ENCODE measurements at regions of chr2 and their contacts with region 1.

Region 1: GRCh38 chr2:7427293-7428060 is 510.3 kb downstream of the RNF144A start:
- DNase-seq: peak in 1 of 2 experiments; percentile 62
- H3K4me3 ChIP-seq: no peak overlapping the region
- H3K4me3 Mint-ChIP-seq: no peak overlapping the region
- H3K27ac Mint-ChIP-seq: no peak overlapping the region
- H3K4me1 ChIP-seq: no peaks in the 10 kb centered on the region
- H3K4me1 Mint-ChIP-seq: no peaks in the 10 kb centered on the region
- H3K27me3 ChIP-seq: no peaks in the 10 kb centered on the region
- H3K27me3 Mint-ChIP-seq: peaks cover 11% of the 10 kb centered on the region
- CTCF ChIP-seq: peak; percentile 61 to 77

Region 2: DNA sequence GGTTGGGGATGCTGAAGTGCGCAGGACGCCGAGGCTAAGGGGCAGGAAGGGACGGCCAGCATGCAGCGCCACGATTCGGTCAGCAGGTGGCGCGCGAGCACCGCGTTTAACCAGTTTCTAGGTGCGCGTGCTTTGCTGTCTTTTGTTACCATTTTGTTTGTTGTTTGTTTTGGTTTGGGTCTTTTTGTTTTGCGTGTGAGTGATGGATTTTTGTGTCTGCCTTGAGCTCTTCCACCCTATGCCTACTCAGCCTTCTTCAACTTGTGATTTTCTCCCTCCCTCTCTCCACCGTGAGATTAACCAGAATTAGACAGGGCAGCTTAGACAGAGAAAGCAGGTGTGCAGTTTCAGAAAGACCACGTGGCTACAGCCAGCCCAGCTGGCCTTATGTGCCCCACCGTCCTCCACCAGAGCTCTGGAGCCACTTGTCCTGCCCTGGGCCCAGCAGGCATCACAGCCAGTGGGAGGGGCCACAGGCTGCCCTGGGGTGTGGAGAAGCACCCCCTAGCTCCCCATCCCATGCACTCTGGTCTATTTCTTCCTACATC is 330.1 kb before region 1 on chr2:
- CTCF ChIA-PET with region 1: no interaction called
- POLR2A ChIA-PET with region 1: no interaction called
- intact Hi-C with region 1: loop called (anchors 5 kb)
- DNase-seq: peak in 1 of 2 experiments; percentile 77
- H3K4me3 ChIP-seq: no peak overlapping the region
- H3K4me3 Mint-ChIP-seq: peak overlapping the region; percentile 27
- H3K27ac Mint-ChIP-seq: no peak overlapping the region
- H3K4me1 ChIP-seq: no peaks in the 10 kb centered on the region
- H3K4me1 Mint-ChIP-seq: peaks cover under 1% of the 10 kb centered on the region
- H3K27me3 ChIP-seq: no peaks in the 10 kb centered on the region
- H3K27me3 Mint-ChIP-seq: peaks cover 12% of the 10 kb centered on the region
- CTCF ChIP-seq: peak; percentile 93 to 96

Region 3: DNA sequence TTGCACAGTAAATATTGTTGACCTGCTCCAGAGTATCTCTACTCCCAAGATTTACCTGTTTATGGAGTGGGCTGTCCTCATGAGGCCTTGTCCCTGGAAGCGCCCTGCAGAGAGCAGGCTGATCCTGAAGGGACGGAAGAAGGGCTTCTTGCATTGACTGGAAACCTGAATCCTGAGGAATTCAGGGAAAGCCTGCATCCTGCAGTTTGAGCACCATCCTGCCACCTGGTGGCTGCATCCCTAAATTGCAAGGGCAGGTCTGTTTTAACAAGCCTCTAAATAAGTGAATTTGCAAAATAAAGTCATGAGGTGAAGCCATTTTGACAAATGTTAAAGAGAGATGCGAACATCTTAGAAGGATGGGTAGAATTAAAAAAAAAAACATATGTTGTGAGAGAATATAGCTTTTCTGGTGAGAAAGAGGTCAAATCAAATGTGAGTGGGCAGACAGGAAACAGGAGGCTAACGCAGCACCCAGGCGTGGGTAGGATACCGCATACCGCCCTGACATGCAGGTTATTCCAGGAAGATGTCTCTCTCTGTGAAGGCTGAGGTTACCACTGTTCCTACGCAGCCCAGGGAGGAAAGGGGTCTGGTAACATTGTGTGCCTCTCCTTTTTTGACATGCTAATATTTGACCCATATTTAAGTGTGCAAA is 244.7 kb after region 1 on chr2:
- CTCF ChIA-PET with region 1: no interaction called
- POLR2A ChIA-PET with region 1: no interaction called
- intact Hi-C with region 1: loop called (anchors 1 kb)
- DNase-seq: peak; percentile 47 to 64
- H3K4me3 ChIP-seq: no peak overlapping the region
- H3K4me3 Mint-ChIP-seq: no peak overlapping the region
- H3K27ac Mint-ChIP-seq: no peak overlapping the region
- H3K4me1 ChIP-seq: no peaks in the 10 kb centered on the region
- H3K4me1 Mint-ChIP-seq: peaks cover 13% of the 10 kb centered on the region
- H3K27me3 ChIP-seq: no peaks in the 10 kb centered on the region
- H3K27me3 Mint-ChIP-seq: no peaks in the 10 kb centered on the region
- CTCF ChIP-seq: peak; percentile 63 to 66

Region 4: DNA sequence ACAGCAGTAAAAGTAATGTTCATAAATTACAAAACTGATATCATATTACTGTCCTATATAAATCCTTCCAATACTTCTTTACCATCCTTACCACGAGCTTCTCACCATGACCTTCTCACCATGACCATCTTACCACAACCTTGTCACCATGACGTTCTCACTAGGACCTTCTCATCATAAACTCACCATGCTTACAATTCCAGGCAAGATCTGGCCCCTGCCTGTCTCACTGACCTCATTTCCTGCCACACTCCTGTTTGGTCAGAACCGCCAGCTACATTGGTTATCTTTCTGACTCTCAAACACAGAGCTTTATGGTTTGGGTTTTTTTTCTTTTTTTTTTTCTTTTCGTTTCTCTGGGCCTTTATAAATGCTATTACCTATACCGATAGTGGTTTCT is 317.4 kb after region 1 on chr2:
- CTCF ChIA-PET with region 1: interaction called, 5 read pairs
- POLR2A ChIA-PET with region 1: no interaction called
- intact Hi-C with region 1: loop called (anchors 5 kb)
- DNase-seq: no peak
- H3K4me3 ChIP-seq: no peak overlapping the region
- H3K4me3 Mint-ChIP-seq: no peak overlapping the region
- H3K27ac Mint-ChIP-seq: no peak overlapping the region
- H3K4me1 ChIP-seq: no peaks in the 10 kb centered on the region
- H3K4me1 Mint-ChIP-seq: no peaks in the 10 kb centered on the region
- H3K27me3 ChIP-seq: no peaks in the 10 kb centered on the region
- H3K27me3 Mint-ChIP-seq: peaks cover 3% of the 10 kb centered on the region
- CTCF ChIP-seq: no peak

Region 5: GRCh38 chr2:8761529-8762164 is 1334.2 kb after region 1 on chr2:
- CTCF ChIA-PET with region 1: interaction called, 4 read pairs
- POLR2A ChIA-PET with region 1: no interaction called
- intact Hi-C with region 1: loop called (anchors 1 kb)
- DNase-seq: peak in 1 of 2 experiments; percentile 34
- H3K4me3 ChIP-seq: no peak overlapping the region
- H3K4me3 Mint-ChIP-seq: no peak overlapping the region
- H3K27ac Mint-ChIP-seq: no peak overlapping the region
- H3K4me1 ChIP-seq: no peaks in the 10 kb centered on the region
- H3K4me1 Mint-ChIP-seq: no peaks in the 10 kb centered on the region
- H3K27me3 ChIP-seq: no peaks in the 10 kb centered on the region
- H3K27me3 Mint-ChIP-seq: no peaks in the 10 kb centered on the region
- CTCF ChIP-seq: peak; percentile 62 to 64